ENCODE measurements at regions of chr15 and their contacts with region 1.

Region 1: DNA sequence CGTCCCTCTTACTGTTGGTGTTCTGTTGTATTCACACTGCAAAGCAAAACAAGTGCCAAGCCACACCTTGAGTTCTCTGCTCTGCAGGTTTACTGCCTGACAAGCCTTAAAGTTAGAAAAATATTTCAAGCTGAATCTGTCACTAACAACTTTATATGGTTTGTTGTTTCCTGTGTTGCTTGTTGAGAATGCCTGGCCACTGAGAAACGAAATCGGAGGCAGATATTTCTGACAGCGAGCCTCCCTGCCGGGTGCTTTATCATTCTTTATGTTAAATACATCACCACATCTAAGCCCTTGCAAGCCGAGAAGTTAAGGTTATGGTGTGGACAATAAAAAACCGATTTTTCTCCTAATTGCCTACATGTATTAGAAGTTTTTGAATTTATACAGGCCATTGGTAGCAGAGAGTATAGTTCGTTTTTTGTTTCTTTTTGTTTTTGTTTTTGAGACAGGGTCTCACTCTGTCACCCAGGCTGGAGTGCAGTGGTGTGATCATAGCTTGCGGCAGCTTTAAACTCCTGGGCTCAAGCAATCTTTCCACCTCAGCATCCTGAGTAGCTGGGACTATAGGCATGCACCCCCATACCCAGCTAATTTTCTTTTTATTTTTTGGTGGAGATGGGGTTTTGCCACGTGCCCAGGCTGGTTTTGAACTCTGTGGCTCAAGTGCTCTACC is 188.4 kb upstream of the ICE2 start:
- DNase-seq: no peak
- CTCF ChIP-seq: no peak

Region 2: GRCh38 chr15:60520825-60521368 is 146.4 kb before region 1 on chr15:
- CTCF ChIA-PET with region 1: no interaction called
- POLR2A ChIA-PET with region 1: no interaction called
- DNase-seq: peak; percentile 60
- CTCF ChIP-seq: peak; percentile 85

Region 3: DNA sequence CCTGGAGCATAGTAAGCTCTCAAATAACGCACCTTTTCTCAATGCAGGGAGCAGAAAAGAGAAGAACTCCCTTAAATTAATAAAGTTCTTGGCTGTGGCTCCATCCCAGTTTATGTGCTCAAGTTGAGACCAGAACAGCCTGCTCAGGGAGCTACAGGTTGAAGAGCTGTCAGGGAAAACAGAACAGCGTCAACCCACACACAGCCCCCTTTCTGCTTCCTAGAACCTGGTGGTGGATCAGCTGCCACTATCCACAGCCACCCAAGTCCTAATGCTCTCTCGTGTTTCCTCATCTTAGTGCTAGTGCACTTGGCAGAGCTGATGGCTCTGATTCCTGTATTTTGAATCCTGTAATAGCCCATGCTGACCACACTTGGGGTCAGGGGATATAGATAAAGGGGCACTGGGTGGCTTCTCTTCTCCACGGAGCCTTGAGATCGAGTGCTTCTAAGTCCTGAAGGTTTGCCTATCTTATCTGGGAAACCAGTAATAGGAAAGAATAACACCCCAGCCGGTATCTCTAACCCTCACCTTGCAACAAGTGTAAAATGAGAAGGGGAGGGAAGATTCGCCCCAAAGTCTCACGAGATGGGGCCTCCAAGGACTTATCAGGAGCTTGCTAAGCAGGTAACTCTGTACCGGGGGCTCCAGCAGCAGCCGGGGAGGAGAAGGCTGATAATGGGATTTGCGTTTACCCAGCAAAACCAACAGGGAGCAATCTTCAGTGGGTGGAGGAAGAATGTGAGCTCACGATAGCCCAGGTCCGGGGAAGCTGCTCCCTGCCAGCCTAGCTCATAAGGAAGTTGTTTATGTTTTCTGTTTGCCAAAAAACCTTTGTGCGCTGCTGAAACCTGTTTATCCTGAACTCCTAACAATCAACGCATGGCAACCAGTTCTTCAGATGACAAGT is 52.2 kb before region 1 on chr15:
- CTCF ChIA-PET with region 1: no interaction called
- POLR2A ChIA-PET with region 1: no interaction called
- DNase-seq: no peak
- CTCF ChIP-seq: no peak

Region 4: GRCh38 chr15:60819860-60820259 is 152.5 kb after region 1 on chr15:
- CTCF ChIA-PET with region 1: no interaction called
- POLR2A ChIA-PET with region 1: interaction called, 10 read pairs
- DNase-seq: no peak
- CTCF ChIP-seq: no peak